Motor neuron (in vitro differentiated cells): ENCODE measurements at regions of chr21 and their contacts with region 1.

Region 1: GRCh38 chr21:26850108-26850643 is 5.0 kb upstream of the ADAMTS1 start:
- ATAC-seq: no peak
- H3K4me3 ChIP-seq: no peak overlapping the region
- H3K27ac ChIP-seq: no peak overlapping the region
- H3K4me1 ChIP-seq: peaks cover 2 to 6% of the 10 kb centered on the region in 2 donors

Region 2: GRCh38 chr21:26756491-26757159 is 93.6 kb before region 1 on chr21:
- in situ Hi-C with region 1: no loop called
- ATAC-seq: peak in 2 of 8 experiments; percentile 35 to 69
- H3K4me3 ChIP-seq: no peak overlapping the region
- H3K27ac ChIP-seq: no peak overlapping the region
- H3K4me1 ChIP-seq: no peaks in the 10 kb centered on the region

Region 3: GRCh38 chr21:26967062-26967913 is 117.1 kb after region 1 on chr21 and contains the start of gene ADAMTS5:
- in situ Hi-C with region 1: loop called in 1 of 9 experiments (anchors 25 kb)
- ATAC-seq: peak; percentile 38 to 78 (median 66)
- H3K4me3 ChIP-seq: peak within 1 kb of the TSS; percentile 41 to 62 (median 52)
- H3K27ac ChIP-seq: no peak within 1 kb of the TSS
- H3K4me1 ChIP-seq: peaks cover 0 to 3% of the 10 kb centered on the region in 2 donors
- total RNA-seq, gene ADAMTS5: 0.13 to 6.9 (median 1.3) TPM

Region 4: DNA sequence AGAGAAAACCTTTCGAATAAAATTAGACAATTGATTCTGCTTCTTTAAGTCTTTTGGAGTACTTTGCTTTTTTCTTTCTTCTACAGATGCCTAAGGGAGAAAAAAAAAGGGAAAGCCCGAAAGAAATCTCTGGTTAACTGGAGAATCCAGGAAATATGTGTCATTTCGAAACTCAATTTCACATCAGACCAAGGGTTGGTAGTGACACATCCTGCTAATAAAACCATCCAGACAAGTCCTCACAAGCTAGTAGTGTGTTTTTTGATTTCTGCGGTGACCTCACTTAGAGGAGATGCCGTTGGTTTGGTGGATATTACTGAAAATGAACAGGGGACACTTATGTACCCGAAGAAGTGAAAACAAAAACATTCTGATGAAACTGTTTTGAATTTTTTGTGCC is 843.2 kb after region 1 on chr21:
- in situ Hi-C with region 1: loop called in 1 of 9 experiments (anchors 25 kb)
- ATAC-seq: peak in 2 of 8 experiments; percentile 32 to 69
- H3K4me3 ChIP-seq: no peak overlapping the region
- H3K27ac ChIP-seq: no peak overlapping the region
- H3K4me1 ChIP-seq: no peaks in the 10 kb centered on the region